Activated CD4-positive, alpha-beta T cell treated with anti-CD3 and anti-CD28 coated beads, Interleukin-2, amount 10 ng/mL, durations not matched to agents 24 days and 14 days (primary cell): ENCODE measurements at regions of chr7 and their contacts with region 1.

Region 1: GRCh38 chr7:35801392-35802101 is 690 bp downstream of the SEPTIN7 start:
- DNase-seq: peak; percentile 92
- H3K4me3 Mint-ChIP-seq: peak overlapping the region; percentile 100
- H3K27ac Mint-ChIP-seq: peak overlapping the region; percentile 98
- H3K4me1 Mint-ChIP-seq: peaks cover 38% of the 10 kb centered on the region
- H3K27me3 Mint-ChIP-seq: no peaks in the 10 kb centered on the region

Region 2: DNA sequence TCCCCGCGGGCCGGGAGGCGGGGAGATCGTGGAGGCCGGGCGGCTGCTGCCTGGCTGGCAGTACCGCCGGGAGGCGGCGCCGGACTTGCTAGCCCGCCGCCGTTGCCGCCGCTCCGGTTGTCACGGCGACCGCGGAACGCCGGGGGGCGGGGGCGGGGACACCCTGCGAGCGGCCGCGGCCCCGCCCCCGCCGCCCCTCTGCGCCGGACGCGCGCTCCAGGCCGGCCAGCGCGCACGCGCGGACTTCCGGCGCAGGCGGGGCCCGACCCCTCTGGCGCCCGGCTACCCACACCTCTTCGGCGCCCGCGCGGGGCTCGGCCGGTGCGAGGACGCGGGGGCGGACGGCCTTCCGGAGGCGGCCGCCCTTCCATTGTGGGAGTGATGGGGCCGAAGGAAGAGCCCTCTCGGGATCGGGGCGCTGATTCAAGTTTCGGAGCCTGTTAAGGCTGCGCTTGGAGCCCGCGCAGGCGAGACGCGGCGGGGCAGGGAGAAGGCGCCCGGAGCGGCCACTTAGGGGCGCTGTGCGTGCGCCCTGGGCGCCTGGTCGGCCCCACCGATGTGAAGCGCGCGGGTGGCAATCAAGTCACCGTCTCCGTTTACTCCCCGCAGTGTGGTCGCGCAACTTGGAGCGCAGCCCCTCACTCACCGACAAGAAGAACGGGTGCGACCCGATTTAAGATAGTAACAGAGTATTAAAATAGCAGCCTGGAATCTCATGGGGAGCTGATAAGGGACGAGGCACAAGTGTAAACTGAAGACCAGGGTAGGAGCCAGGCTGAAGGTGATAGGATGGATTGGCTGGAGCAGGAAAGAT is 763.8 kb before region 1 on chr7:
- intact Hi-C with region 1: loop called (anchors 5 kb)
- DNase-seq: peak; percentile 97
- H3K4me3 Mint-ChIP-seq: peak overlapping the region; percentile 86
- H3K27ac Mint-ChIP-seq: peak overlapping the region; percentile 78
- H3K4me1 Mint-ChIP-seq: peaks cover 24% of the 10 kb centered on the region
- H3K27me3 Mint-ChIP-seq: peaks cover 27% of the 10 kb centered on the region

Region 3: GRCh38 chr7:35729061-35729783 is 72.3 kb before region 1 on chr7:
- intact Hi-C with region 1: loop called (anchors 1 kb)
- DNase-seq: peak; percentile 74
- H3K4me3 Mint-ChIP-seq: peak overlapping the region; percentile 39
- H3K27ac Mint-ChIP-seq: peak overlapping the region; percentile 48
- H3K4me1 Mint-ChIP-seq: peaks cover 44% of the 10 kb centered on the region
- H3K27me3 Mint-ChIP-seq: peaks cover 11% of the 10 kb centered on the region

Region 4: DNA sequence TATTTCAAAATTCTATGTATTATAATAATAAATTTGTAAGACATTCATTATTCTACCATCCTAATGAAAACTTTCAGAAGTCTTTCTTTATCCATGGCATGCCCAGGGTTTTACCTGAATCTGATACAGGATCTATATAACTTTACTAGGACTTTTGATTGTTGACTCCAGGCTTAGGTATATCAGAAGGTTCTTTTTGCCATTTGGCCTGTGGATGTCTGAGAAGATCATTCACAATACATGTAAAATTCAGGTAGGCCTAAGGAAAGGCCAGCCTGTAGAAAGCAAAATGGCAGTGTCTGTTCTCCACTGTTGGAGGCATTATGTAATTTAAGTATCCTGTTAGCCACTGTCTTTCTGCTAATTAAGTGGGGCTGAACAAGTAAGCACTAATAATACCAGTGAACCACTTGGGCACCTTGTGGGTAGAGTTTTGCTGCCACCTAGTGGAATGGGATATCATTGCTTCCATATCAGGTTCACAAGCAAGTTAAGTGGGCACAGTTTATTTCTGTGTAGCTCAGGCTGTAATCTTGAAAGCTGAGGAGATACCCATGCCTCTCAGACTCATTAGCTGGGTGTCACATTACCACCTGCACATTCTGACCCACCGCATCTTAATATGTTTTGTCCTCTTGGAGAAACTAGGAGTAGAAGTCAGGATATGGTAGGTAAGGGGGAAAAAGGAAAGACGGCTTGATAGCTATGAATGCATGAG is 104.8 kb after region 1 on chr7:
- intact Hi-C with region 1: loop called (anchors 2 kb)
- DNase-seq: peak; percentile 91
- H3K4me3 Mint-ChIP-seq: no peak overlapping the region
- H3K27ac Mint-ChIP-seq: no peak overlapping the region
- H3K4me1 Mint-ChIP-seq: no peaks in the 10 kb centered on the region
- H3K27me3 Mint-ChIP-seq: no peaks in the 10 kb centered on the region

Region 5: DNA sequence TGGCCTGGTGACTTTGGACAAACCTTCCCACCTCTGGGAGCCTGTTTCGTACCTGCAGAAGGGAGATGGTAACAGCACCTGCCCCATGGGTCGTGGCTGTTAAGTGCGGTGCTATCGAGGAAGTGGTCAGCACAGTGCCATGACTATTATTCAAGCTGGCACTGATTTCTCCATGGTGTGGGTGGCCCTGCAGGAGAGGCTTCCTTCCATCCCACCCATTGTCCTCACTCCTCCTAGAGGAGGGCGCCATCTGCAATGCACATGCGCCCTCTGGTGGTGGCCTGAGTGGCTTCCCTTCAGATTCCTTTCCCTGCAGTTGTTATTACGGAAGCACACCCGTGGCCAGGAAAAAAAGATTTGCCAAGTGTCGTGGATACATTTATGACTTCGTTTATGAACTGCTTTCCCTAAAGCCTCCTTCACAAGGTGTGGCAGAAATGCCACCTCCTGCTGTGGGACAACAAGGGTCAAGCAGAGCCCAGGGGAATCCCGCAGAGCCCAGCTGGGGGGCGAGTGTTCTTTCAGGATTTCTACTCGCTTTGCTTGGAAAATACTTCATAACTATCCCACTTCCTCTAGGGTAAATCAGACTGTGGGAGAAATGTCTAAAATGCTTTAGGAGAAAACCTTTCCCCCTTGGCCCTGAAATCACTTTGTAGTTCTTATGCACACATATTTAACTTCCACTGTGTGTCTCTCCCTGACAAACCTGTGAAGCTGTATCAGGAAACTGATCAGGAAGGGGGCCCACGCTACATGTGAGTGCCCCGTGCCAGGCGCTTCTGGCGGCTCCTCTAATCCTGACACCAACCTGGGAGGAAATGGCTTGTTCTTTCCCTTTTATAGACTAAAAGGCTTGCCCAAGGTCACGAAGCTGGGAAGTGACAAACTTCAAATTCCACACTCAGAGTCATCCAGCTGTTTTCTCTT is 490.1 kb after region 1 on chr7:
- intact Hi-C with region 1: loop called (anchors 5 kb)
- DNase-seq: peak; percentile 91
- H3K4me3 Mint-ChIP-seq: peak overlapping the region; percentile 77
- H3K27ac Mint-ChIP-seq: no peak overlapping the region
- H3K4me1 Mint-ChIP-seq: peaks cover 40% of the 10 kb centered on the region
- H3K27me3 Mint-ChIP-seq: no peaks in the 10 kb centered on the region